GM10248 (cell line): ENCODE measurements at regions of chr20 and their contacts with region 1.

Region 1: DNA sequence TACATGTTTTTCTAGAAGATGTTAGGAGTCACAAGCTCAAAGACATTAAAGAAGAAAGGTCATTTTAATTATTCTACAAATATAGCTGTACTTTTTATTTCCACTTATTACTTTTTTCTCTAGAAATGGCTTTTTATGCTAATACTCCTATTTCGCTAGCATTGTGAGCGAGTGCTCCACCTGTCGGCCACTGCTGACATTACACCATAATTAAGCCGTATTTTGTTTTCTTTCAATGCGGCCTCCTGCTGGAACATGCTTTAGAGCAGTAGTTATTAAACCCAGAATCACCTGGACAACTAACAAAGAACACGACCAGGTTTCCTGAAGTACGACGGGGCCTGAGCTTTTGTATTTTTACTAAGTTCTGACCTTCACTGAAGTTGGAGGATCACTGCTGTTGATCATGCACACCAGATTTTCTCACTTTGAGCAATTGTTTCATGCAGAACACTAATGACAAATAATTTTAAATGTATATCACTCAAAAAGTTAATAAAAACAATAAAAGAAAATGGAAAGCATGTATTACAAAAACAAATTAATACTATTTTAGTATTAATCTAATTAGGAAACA is 74.1 kb upstream of the PAK5 start:
- DNase-seq: peak; percentile 24
- CTCF ChIP-seq: peak; percentile 92

Region 2: GRCh38 chr20:9258901-9259300 is 654.0 kb before region 1 on chr20:
- CTCF ChIA-PET with region 1: no interaction called
- POLR2A ChIA-PET with region 1: no interaction called
- DNase-seq: no peak
- CTCF ChIP-seq: no peak

Region 3: DNA sequence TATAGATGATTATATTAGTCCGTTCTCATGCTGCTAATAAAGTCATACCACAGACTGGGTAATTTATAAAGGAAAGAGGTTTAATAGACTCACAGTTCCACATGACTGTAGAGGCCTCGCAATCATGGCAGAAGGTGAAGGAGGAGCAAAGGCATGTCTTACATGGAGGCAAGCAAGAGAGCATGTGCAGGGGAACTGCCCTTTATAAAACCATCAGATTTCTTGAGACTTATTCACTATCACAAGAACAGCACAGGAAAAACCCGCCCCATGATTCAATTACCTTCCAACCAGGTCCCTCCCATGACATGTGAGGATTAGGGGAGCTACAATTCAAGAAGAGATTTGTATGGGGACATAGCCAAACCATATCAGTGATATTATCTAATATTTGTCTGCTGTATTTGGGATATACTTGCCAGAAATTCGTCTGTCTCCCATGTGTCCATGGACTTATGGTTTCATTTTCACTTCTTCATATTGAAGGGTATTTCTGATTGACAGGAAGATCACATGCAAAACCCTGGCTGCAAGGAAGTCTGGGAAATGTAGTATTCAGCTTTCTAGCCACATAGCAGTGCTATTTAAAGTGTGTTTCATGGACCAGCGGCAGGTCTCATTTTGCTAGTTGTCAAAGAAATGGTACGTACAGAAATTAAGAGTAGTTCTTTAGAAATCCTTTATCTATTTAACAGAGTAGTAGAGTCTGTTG is 23.5 kb before region 1 on chr20:
- CTCF ChIA-PET with region 1: interaction called, 11 read pairs
- POLR2A ChIA-PET with region 1: no interaction called
- DNase-seq: peak; percentile 15
- CTCF ChIP-seq: no peak

Region 4: DNA sequence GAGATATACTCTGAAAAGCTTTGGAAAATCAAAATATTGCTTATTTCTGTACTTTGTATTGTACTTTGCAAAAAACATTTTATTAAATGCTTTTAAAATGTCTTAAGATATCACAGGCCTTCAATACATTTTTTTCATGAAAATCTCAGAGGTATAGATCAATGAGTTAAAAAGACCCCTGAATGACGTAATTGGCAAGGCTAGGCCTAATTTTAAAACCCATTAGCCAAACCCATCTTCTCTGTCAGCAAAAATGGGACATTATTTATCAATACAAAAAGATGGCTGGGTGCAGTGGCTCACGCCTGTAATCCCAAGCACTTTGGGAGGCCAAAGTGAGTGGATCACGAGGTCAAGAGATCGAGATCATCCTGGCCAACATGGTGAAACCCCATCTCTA is 10.7 kb after region 1 on chr20:
- CTCF ChIA-PET with region 1: interaction called, 23 read pairs
- POLR2A ChIA-PET with region 1: no interaction called
- DNase-seq: no peak
- CTCF ChIP-seq: no peak

Region 5: GRCh38 chr20:9928955-9929354 is 16.0 kb after region 1 on chr20:
- CTCF ChIA-PET with region 1: interaction called, 23 read pairs
- POLR2A ChIA-PET with region 1: no interaction called
- DNase-seq: no peak
- CTCF ChIP-seq: no peak